CD8-positive, alpha-beta memory T cell (primary cell): ENCODE measurements at regions of chr1 and their contacts with region 1.

Region 1: GRCh38 chr1:44799770-44800584 is at the start of gene PLK3:
- DNase-seq: peak; percentile 97 to 99 (median 98)
- H3K4me3 ChIP-seq: peak within 1 kb of the TSS; percentile 90
- H3K4me3 Mint-ChIP-seq: peak within 1 kb of the TSS; percentile 80 to 98 (median 96)
- H3K27ac ChIP-seq: peak within 1 kb of the TSS; percentile 93
- H3K27ac Mint-ChIP-seq: peak within 1 kb of the TSS; percentile 90 to 99 (median 98)
- H3K4me1 ChIP-seq: peaks cover 31% of the 10 kb centered on the region
- H3K4me1 Mint-ChIP-seq: peaks cover 25 to 41% (median 38%) of the 10 kb centered on the region in 3 donors
- H3K27me3 ChIP-seq: no peaks in the 10 kb centered on the region
- H3K27me3 Mint-ChIP-seq: no peaks in the 10 kb centered on the region
- total RNA-seq, gene PLK3: 104 to 114 TPM

Region 2: GRCh38 chr1:44730741-44731512 is 69.0 kb before region 1 on chr1 and contains the start of gene RNU5D-1:
- CTCF ChIA-PET with region 1: interaction called, 11 read pairs
- POLR2A ChIA-PET with region 1: interaction called, 3 read pairs
- DNase-seq: peak; percentile 88 to 94 (median 90)
- H3K4me3 ChIP-seq: peak within 1 kb of the TSS; percentile 37
- H3K4me3 Mint-ChIP-seq: peak within 1 kb of the TSS; percentile 63 to 86 (median 78)
- H3K27ac ChIP-seq: peak within 1 kb of the TSS; percentile 97
- H3K27ac Mint-ChIP-seq: peak within 1 kb of the TSS; percentile 96 to 100 (median 100)
- H3K4me1 ChIP-seq: peaks cover 14% of the 10 kb centered on the region
- H3K4me1 Mint-ChIP-seq: peaks cover 19 to 36% (median 28%) of the 10 kb centered on the region in 3 donors
- H3K27me3 ChIP-seq: no peaks in the 10 kb centered on the region
- H3K27me3 Mint-ChIP-seq: no peaks in the 10 kb centered on the region
- total RNA-seq, gene RNU5D-1: not detected

Region 3: GRCh38 chr1:44786138-44786840 is 13.7 kb before region 1 on chr1:
- CTCF ChIA-PET with region 1: interaction called, 19 read pairs
- POLR2A ChIA-PET with region 1: interaction called, 12 read pairs
- DNase-seq: peak; percentile 71 to 83 (median 77)
- H3K4me3 ChIP-seq: peak overlapping the region; percentile 74
- H3K4me3 Mint-ChIP-seq: peak overlapping the region; percentile 76 to 93 (median 81)
- H3K27ac ChIP-seq: no peak overlapping the region
- H3K27ac Mint-ChIP-seq: peak overlapping the region; percentile 77 to 98 (median 87)
- H3K4me1 ChIP-seq: peaks cover 29% of the 10 kb centered on the region
- H3K4me1 Mint-ChIP-seq: peaks cover 27 to 36% (median 30%) of the 10 kb centered on the region in 3 donors
- H3K27me3 ChIP-seq: no peaks in the 10 kb centered on the region
- H3K27me3 Mint-ChIP-seq: no peaks in the 10 kb centered on the region

Region 4: DNA sequence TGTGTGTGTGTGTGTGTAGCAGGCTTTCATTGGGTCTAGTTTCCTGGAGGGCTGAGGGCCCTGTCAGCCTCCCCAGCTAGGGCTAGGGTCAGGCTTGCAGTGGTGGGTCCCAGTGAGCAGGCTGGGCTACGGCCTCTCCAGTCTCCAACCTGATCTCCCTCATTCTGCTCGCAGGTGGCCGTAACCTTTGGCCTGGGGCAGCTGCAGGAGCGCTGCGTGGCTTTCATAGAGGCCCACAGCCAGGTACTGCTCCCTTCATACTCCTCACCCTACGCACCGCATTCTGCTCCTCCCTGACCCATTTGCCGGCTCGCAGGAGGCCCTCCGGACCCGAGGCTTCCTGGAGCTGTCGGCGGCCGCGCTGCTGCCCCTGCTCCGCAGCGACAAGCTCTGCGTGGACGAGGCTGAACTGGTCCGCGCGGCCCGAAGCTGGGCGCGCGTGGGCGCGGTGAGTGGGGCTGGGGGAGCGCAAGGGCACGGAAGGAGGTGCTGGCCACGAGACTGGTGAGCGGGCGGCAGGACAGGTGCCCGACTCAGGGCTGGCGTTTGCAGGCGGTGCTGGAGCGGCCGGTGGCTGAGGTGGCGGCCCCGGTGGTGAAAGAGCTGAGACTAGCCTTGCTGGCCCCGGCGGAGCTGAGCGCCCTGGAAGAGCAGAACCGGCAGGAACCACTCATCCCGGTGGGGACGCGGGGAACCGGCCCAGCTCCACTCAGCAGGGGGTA is 13.0 kb after region 1 on chr1:
- CTCF ChIA-PET with region 1: interaction called, 112 read pairs
- POLR2A ChIA-PET with region 1: interaction called, 122 read pairs
- DNase-seq: peak in 1 of 5 donors; percentile 45
- H3K4me3 ChIP-seq: no peak overlapping the region
- H3K4me3 Mint-ChIP-seq: peak overlapping the region in 6 of 7 donors; percentile 62 to 96 (median 88)
- H3K27ac ChIP-seq: no peak overlapping the region
- H3K27ac Mint-ChIP-seq: peak overlapping the region in 6 of 8 donors; percentile 8 to 100 (median 70)
- H3K4me1 ChIP-seq: peaks cover 52% of the 10 kb centered on the region
- H3K4me1 Mint-ChIP-seq: peaks cover 59 to 67% (median 66%) of the 10 kb centered on the region in 3 donors
- H3K27me3 ChIP-seq: no peaks in the 10 kb centered on the region
- H3K27me3 Mint-ChIP-seq: peaks cover 0 to 7% of the 10 kb centered on the region in 2 donors

Region 5: GRCh38 chr1:44819608-44820327 is 19.8 kb after region 1 on chr1:
- CTCF ChIA-PET with region 1: interaction called, 112 read pairs
- POLR2A ChIA-PET with region 1: interaction called, 122 read pairs
- DNase-seq: peak; percentile 65 to 89 (median 85)
- H3K4me3 ChIP-seq: peak overlapping the region; percentile 72
- H3K4me3 Mint-ChIP-seq: peak overlapping the region; percentile 91 to 98 (median 95)
- H3K27ac ChIP-seq: peak overlapping the region; percentile 99
- H3K27ac Mint-ChIP-seq: peak overlapping the region; percentile 100
- H3K4me1 ChIP-seq: peaks cover 14% of the 10 kb centered on the region
- H3K4me1 Mint-ChIP-seq: peaks cover 32 to 44% (median 40%) of the 10 kb centered on the region in 3 donors
- H3K27me3 ChIP-seq: no peaks in the 10 kb centered on the region
- H3K27me3 Mint-ChIP-seq: no peaks in the 10 kb centered on the region

Region 6: GRCh38 chr1:44835738-44836675 is 36.0 kb after region 1 on chr1:
- CTCF ChIA-PET with region 1: interaction called, 11 read pairs
- POLR2A ChIA-PET with region 1: interaction called, 12 read pairs
- DNase-seq: peak; percentile 67 to 88 (median 72)
- H3K4me3 ChIP-seq: no peak overlapping the region
- H3K4me3 Mint-ChIP-seq: peak overlapping the region in 5 of 7 donors; percentile 0 to 49 (median 38)
- H3K27ac ChIP-seq: no peak overlapping the region
- H3K27ac Mint-ChIP-seq: peak overlapping the region in 4 of 8 donors; percentile 6 to 81 (median 37)
- H3K4me1 ChIP-seq: no peaks in the 10 kb centered on the region
- H3K4me1 Mint-ChIP-seq: peaks cover 5 to 8% (median 7%) of the 10 kb centered on the region in 3 donors
- H3K27me3 ChIP-seq: no peaks in the 10 kb centered on the region
- H3K27me3 Mint-ChIP-seq: peaks cover 6 to 13% of the 10 kb centered on the region in 2 donors

Region 7: GRCh38 chr1:44903011-44903680 is 103.2 kb after region 1 on chr1:
- CTCF ChIA-PET with region 1: no interaction called
- POLR2A ChIA-PET with region 1: no interaction called
- DNase-seq: no peak
- H3K4me3 ChIP-seq: no peak overlapping the region
- H3K4me3 Mint-ChIP-seq: no peak overlapping the region
- H3K27ac ChIP-seq: no peak overlapping the region
- H3K27ac Mint-ChIP-seq: no peak overlapping the region
- H3K4me1 ChIP-seq: no peaks in the 10 kb centered on the region
- H3K4me1 Mint-ChIP-seq: peaks cover 0 to 5% (median 0%) of the 10 kb centered on the region in 3 donors
- H3K27me3 ChIP-seq: no peaks in the 10 kb centered on the region
- H3K27me3 Mint-ChIP-seq: no peaks in the 10 kb centered on the region